Natural killer cell (primary cell): ENCODE measurements at regions of chr15 and their contacts with region 1.

Region 1: GRCh38 chr15:94253742-94254141 is 22.4 kb downstream of the MCTP2 start:
- DNase-seq: peak in 1 of 2 donors; percentile 23
- ATAC-seq: peak; percentile 65 to 78 (median 68)
- H3K4me3 ChIP-seq: no peak overlapping the region
- H3K4me3 Mint-ChIP-seq: peak overlapping the region; percentile 67
- H3K27ac ChIP-seq: peak overlapping the region; percentile 27
- H3K27ac Mint-ChIP-seq: peak overlapping the region in 1 of 2 donors; percentile 92
- H3K4me1 ChIP-seq: peaks cover 23% of the 10 kb centered on the region
- H3K4me1 Mint-ChIP-seq: peaks cover 89 to 90% of the 10 kb centered on the region in 2 donors
- H3K27me3 ChIP-seq: no peaks in the 10 kb centered on the region
- H3K27me3 Mint-ChIP-seq: no peaks in the 10 kb centered on the region
- CTCF ChIP-seq: no peak

Region 2: DNA sequence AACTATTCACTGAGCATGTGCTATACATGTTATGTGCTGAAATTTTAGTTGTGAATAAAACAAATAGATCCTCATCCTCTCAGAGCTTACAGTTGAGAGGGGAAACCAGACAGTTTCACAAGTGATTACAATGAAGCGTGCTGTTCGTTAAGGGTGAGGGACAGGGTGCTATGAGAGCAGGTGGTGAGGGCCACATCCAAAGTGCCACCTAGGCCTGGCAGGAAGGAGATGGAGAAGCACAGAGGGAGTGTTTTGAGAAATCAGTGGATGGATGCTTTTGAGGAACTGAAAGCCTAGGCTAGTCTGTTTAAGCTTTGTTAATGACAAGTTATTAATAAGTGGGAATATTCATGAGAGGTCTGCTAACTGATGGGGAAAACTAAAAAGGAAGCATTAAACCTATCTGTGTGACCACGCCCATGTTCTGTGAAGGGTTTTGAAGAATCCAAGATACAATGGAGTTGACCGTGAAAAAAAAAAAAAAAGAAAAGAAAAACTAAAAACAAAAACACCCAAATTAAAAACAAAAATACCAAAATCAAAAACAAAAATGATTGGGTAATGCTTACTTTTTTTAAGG is 15.1 kb before region 1 on chr15:
- intact Hi-C with region 1: loop called (anchors 2 kb)
- DNase-seq: peak in 1 of 2 donors; percentile 31
- ATAC-seq: peak; percentile 68 to 81 (median 75)
- H3K4me3 ChIP-seq: no peak overlapping the region
- H3K4me3 Mint-ChIP-seq: peak overlapping the region; percentile 68
- H3K27ac ChIP-seq: peak overlapping the region; percentile 75
- H3K27ac Mint-ChIP-seq: peak overlapping the region; percentile 90 to 96
- H3K4me1 ChIP-seq: peaks cover 38% of the 10 kb centered on the region
- H3K4me1 Mint-ChIP-seq: peaks cover 88 to 89% of the 10 kb centered on the region in 2 donors
- H3K27me3 ChIP-seq: no peaks in the 10 kb centered on the region
- H3K27me3 Mint-ChIP-seq: no peaks in the 10 kb centered on the region
- CTCF ChIP-seq: no peak

Region 3: DNA sequence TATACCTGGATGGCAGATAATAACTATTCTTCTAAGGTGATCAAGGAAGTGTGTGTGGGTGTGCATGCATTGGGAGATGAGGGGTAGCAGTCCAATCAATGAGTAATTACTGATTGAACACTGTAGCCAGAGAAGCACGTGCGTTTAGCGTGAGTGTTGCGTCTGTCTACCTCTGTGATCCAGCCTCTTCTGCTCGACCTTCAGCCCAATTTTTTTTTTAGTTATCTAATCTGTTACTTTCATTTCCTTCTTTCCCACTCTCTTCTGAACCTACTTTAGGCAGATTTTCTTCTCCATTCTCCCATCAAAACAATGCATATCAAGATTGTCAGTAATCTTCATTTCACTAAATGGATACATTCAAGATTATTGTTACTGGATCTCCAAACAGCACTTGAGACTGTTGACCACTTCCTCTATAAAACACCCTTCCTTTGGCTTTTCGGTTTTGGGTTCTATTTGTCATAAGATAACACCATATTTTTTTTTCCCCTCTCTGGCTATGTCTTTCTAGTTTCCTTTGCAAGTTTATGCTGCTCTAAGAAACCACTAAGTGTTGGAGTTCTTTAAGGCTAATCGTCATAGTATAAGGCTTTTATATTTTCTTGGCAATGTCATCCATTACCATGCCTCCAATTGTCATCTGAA is 18.6 kb after region 1 on chr15:
- intact Hi-C with region 1: loop called (anchors 1 kb)
- DNase-seq: peak in 1 of 2 donors; percentile 62
- ATAC-seq: peak; percentile 74 to 88 (median 86)
- H3K4me3 ChIP-seq: no peak overlapping the region
- H3K4me3 Mint-ChIP-seq: no peak overlapping the region
- H3K27ac ChIP-seq: peak overlapping the region; percentile 93
- H3K27ac Mint-ChIP-seq: no peak overlapping the region
- H3K4me1 ChIP-seq: peaks cover 41% of the 10 kb centered on the region
- H3K4me1 Mint-ChIP-seq: peaks cover 14 to 23% of the 10 kb centered on the region in 2 donors
- H3K27me3 ChIP-seq: no peaks in the 10 kb centered on the region
- H3K27me3 Mint-ChIP-seq: no peaks in the 10 kb centered on the region
- CTCF ChIP-seq: no peak

Region 4: DNA sequence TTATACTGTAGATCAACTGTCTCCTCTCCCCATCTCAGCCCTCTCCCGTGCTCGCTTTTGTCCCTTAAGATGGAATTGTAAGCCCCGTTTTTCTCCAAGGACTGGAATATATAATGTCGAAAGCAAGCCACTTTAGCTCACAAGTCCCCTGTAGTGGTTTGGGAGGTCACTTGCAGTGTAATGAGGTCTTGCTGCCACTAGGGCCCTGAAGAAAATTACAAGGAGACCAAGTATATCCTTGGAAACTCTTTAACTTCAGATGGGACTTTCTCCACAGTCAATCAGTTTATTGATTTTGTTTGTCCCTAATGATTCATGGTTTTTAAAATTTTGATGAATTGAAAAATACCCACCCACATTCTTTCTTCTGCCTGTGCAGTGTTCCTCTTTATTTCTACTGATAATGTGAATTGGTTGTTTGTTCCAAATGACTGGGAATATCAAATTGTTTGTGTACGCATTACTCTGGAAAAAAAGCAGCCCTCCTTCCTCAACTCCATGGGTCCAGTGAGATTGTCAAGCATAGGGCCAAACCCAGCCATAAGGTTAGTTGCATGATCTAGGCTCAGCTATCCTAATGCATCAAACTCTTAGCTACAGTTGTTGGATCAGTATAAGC is 272.4 kb after region 1 on chr15:
- intact Hi-C with region 1: no loop called
- DNase-seq: no peak
- ATAC-seq: no peak
- H3K4me3 ChIP-seq: no peak overlapping the region
- H3K4me3 Mint-ChIP-seq: no peak overlapping the region
- H3K27ac ChIP-seq: no peak overlapping the region
- H3K27ac Mint-ChIP-seq: no peak overlapping the region
- H3K4me1 ChIP-seq: no peaks in the 10 kb centered on the region
- H3K4me1 Mint-ChIP-seq: no peaks in the 10 kb centered on the region
- H3K27me3 ChIP-seq: no peaks in the 10 kb centered on the region
- H3K27me3 Mint-ChIP-seq: peaks cover 16 to 62% of the 10 kb centered on the region in 2 donors
- CTCF ChIP-seq: peak; percentile 22

Region 5: DNA sequence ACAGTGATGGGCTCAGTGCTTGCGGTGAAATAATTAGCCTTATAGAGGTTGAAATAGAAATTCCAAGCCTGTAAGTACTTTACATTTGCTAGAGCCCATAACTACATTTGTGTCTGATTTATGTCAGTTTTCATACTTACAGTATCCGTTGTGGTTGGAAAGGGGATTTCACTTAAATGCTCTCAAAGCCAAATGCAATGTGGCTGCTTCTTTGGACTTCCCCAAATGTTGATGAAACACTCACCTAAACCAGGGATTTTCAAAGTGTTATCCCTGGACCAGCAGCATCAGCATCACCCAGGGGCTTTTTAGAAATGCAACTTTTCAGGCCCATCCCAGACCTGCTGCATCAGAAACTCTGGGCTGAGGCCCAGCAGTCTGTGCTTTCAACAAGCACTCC is 356.3 kb after region 1 on chr15:
- intact Hi-C with region 1: no loop called
- DNase-seq: peak in 1 of 2 donors; percentile 5
- ATAC-seq: peak in 2 of 3 donors; percentile 31 to 74
- H3K4me3 ChIP-seq: no peak overlapping the region
- H3K4me3 Mint-ChIP-seq: no peak overlapping the region
- H3K27ac ChIP-seq: no peak overlapping the region
- H3K27ac Mint-ChIP-seq: no peak overlapping the region
- H3K4me1 ChIP-seq: peaks cover 8% of the 10 kb centered on the region
- H3K4me1 Mint-ChIP-seq: peaks cover 27 to 34% of the 10 kb centered on the region in 2 donors
- H3K27me3 ChIP-seq: peaks cover 2% of the 10 kb centered on the region
- H3K27me3 Mint-ChIP-seq: peaks cover 14 to 16% of the 10 kb centered on the region in 2 donors
- CTCF ChIP-seq: no peak